Heart left ventricle (tissue), 16 donors: ENCODE measurements at regions of chr17 and their contacts with region 1.

Region 1: GRCh38 chr17:29931231-29931932 is 1.4 kb upstream of the SSH2 start:
- DNase-seq: peak; percentile 65 to 74 (median 69)
- ATAC-seq: peak; percentile 67 to 84 (median 74)
- H3K4me3 ChIP-seq: peak overlapping the region in 9 of 12 donors; percentile 65 to 95 (median 85)
- H3K27ac ChIP-seq: peak overlapping the region in 4 of 12 donors; percentile 3 to 87 (median 52)
- H3K4me1 ChIP-seq: peaks cover 0 to 40% (median 31%) of the 10 kb centered on the region in 12 donors
- H3K27me3 ChIP-seq: no peaks in the 10 kb centered on the region
- CTCF ChIP-seq: peak; percentile 82 to 93 (median 86)
- POLR2A ChIP-seq: no peak

Region 2: GRCh38 chr17:29640413-29640812 is 291.0 kb before region 1 on chr17:
- intact Hi-C with region 1: loop called in 9 of 10 experiments (anchors 1 to 10 kb)
- DNase-seq: no peak
- ATAC-seq: peak in 3 of 4 donors; percentile 6 to 30 (median 15)
- H3K4me3 ChIP-seq: no peak overlapping the region
- H3K27ac ChIP-seq: peak overlapping the region; percentile 60 to 83 (median 76)
- H3K4me1 ChIP-seq: peaks cover 11 to 69% (median 66%) of the 10 kb centered on the region in 12 donors
- H3K27me3 ChIP-seq: no peaks in the 10 kb centered on the region
- CTCF ChIP-seq: no peak
- POLR2A ChIP-seq: no peak

Region 3: DNA sequence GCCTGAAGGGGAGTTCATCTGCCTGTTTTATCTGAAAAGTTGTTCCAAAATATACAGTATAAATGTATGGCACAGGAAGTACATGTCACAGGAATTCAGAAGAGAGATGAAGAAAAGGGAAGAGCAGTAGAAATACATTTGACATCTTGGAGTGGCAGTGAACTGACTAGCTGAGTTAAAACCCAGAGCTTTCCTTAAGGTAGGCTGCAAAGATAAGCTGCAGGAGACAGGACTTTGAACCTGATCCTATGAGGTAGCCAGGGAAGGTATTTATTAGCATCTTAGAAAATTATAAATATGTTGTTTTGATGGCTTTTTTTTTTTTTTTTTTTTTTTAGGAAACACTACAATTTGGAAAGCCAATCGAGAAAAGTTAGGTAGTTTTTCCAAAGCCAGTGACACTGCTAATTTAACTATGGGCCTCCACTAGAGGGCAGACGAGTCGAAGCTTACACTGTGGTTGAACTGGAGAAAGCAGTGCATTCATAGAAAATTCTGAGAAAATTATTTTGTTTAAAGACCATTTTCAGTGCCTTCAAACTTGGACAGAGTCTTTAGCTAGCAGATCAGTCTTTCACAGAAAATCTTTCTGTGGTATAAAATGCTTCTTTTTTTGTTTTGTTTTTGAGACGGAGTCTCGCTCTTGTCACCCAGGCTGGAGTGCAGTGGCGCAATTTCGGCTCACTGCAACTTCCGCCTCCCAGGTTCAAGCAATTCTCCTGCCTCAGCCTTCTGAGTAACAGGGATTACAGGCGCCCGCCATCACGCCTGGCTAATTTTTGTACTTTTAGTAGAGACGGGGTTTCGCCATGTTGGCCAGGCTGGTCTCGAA is 123.6 kb before region 1 on chr17:
- intact Hi-C with region 1: loop called (anchors 1 to 2 kb)
- DNase-seq: peak in 4 of 5 donors; percentile 54 to 66 (median 60)
- ATAC-seq: peak in 3 of 4 donors; percentile 64 to 84 (median 72)
- H3K4me3 ChIP-seq: peak overlapping the region in 2 of 12 donors; percentile 18 to 36
- H3K27ac ChIP-seq: peak overlapping the region in 1 of 12 donors; percentile 60
- H3K4me1 ChIP-seq: peaks cover 0 to 4% (median 0%) of the 10 kb centered on the region in 12 donors
- H3K27me3 ChIP-seq: no peaks in the 10 kb centered on the region
- CTCF ChIP-seq: peak; percentile 63 to 88 (median 76)
- POLR2A ChIP-seq: no peak

Region 4: GRCh38 chr17:29883497-29883896 is 47.9 kb before region 1 on chr17:
- intact Hi-C with region 1: loop called in 1 of 10 experiments (anchors 5 kb)
- DNase-seq: no peak
- ATAC-seq: no peak
- H3K4me3 ChIP-seq: no peak overlapping the region
- H3K27ac ChIP-seq: no peak overlapping the region
- H3K4me1 ChIP-seq: peaks cover 0 to 27% (median 9%) of the 10 kb centered on the region in 12 donors
- H3K27me3 ChIP-seq: no peaks in the 10 kb centered on the region
- CTCF ChIP-seq: no peak
- POLR2A ChIP-seq: no peak

Region 5: DNA sequence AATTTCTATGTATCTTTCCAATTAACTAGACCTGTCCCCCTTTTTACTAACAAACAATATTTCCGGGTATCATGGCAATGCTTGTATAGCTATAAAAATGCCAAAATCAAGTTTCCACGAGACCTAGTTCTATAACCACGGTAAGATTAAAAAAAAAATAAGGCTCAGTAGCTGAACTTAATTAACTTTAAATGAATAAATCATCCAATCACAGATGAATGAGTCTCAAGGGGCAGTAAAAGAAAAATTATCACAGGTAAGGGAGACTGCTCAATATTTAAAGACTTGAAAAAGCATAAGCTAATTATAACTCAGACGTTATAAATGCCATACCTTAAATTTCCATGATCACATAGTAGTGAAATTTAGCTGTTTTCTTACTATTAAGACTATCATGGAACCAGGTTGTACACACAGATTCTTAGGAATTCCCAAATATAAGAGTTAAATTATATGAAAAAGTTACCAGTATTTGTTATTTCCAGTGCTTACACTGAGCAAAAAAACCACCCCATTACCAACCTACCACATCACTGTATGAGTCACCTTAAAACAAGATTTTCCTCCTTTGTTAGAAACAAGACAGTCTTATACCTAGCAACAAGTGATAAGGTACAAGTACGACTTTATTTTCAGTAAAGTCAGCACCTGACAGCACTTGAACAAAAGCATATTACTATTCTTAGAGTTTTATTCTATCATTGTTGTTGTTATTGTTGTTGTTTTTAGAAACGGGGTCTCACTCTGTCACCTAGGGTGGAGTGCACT is 22.0 kb before region 1 on chr17:
- intact Hi-C with region 1: no loop called
- DNase-seq: no peak
- ATAC-seq: no peak
- H3K4me3 ChIP-seq: no peak overlapping the region
- H3K27ac ChIP-seq: no peak overlapping the region
- H3K4me1 ChIP-seq: peaks cover 0 to 12% (median 0%) of the 10 kb centered on the region in 12 donors
- H3K27me3 ChIP-seq: no peaks in the 10 kb centered on the region
- CTCF ChIP-seq: no peak
- POLR2A ChIP-seq: no peak